BJ (cell line): ENCODE measurements at regions of chr17 and their contacts with region 1.

Region 1: GRCh38 chr17:3827124-3827773 is 18.8 kb downstream of the NCBP3 start:
- DNase-seq: no peak
- H3K4me3 ChIP-seq: no peak overlapping the region
- H3K27me3 ChIP-seq: no peaks in the 10 kb centered on the region
- CTCF ChIP-seq: peak; percentile 70

Region 2: DNA sequence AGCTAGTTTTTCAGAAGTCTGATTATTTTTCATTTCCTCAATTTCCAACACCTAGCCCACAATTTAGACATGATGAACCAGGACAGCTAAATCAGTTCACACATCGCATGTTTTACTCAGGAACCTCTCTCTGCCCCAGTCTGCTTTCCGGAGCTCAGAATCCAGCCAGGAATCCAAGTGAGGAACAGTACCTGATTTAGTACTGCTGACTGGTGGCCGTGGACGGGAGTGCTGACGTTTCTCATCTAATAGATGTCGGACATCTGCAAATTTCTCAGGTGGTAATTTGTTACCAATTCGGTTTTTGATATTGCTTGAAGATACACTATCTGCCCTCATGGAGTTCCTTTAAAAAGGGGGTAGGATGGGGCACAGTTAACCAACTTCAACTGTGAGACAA is 11.3 kb before region 1 on chr17:
- CTCF ChIA-PET with region 1: interaction called, 15 read pairs
- POLR2A ChIA-PET with region 1: no interaction called
- DNase-seq: no peak
- H3K4me3 ChIP-seq: no peak overlapping the region
- H3K27me3 ChIP-seq: no peaks in the 10 kb centered on the region
- CTCF ChIP-seq: no peak

Region 3: GRCh38 chr17:3879186-3879585 is 51.9 kb after region 1 on chr17:
- CTCF ChIA-PET with region 1: no interaction called
- POLR2A ChIA-PET with region 1: no interaction called
- DNase-seq: peak; percentile 33
- H3K4me3 ChIP-seq: no peak overlapping the region
- H3K27me3 ChIP-seq: no peaks in the 10 kb centered on the region
- CTCF ChIP-seq: no peak